ENCODE measurements at regions of chr20 and their contacts with region 1.

Region 1: GRCh38 chr20:63223221-63224207 is 7.6 kb upstream of the YTHDF1 start:
- DNase-seq: peak in 3 of 5 donors; percentile 23 to 60 (median 41)
- H3K4me3 ChIP-seq: no peak overlapping the region
- H3K4me3 Mint-ChIP-seq: no peak overlapping the region
- H3K27ac ChIP-seq: no peak overlapping the region
- H3K27ac Mint-ChIP-seq: no peak overlapping the region
- H3K4me1 ChIP-seq: no peaks in the 10 kb centered on the region
- H3K4me1 Mint-ChIP-seq: no peaks in the 10 kb centered on the region
- H3K27me3 ChIP-seq: no peaks in the 10 kb centered on the region
- H3K27me3 Mint-ChIP-seq: peaks cover 1 to 19% of the 10 kb centered on the region in 2 donors

Region 2: DNA sequence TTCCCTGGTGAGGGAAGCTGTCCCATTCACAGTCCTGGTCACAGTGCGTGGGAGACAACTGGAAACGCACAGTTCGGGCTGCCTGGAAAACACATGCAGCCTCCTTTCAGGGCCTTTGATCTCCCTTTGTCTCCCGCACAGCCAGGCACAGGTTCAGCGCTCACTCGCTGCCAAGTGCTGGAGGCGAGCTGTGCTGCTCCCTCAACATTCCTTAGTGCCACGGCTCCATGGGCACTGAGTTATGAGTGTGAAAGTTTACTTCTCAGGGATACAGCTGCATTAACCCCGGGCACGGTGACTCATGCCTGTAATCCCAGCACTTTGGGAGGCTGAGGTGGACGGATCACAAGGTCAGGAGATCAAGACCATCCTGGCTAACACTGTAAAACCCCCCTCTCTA is 16.6 kb before region 1 on chr20:
- CTCF ChIA-PET with region 1: interaction called, 23 read pairs
- POLR2A ChIA-PET with region 1: no interaction called
- DNase-seq: no peak
- H3K4me3 ChIP-seq: no peak overlapping the region
- H3K4me3 Mint-ChIP-seq: no peak overlapping the region
- H3K27ac ChIP-seq: no peak overlapping the region
- H3K27ac Mint-ChIP-seq: no peak overlapping the region
- H3K4me1 ChIP-seq: peaks cover 8% of the 10 kb centered on the region
- H3K4me1 Mint-ChIP-seq: peaks cover 33 to 61% (median 54%) of the 10 kb centered on the region in 3 donors
- H3K27me3 ChIP-seq: no peaks in the 10 kb centered on the region
- H3K27me3 Mint-ChIP-seq: no peaks in the 10 kb centered on the region

Region 3: GRCh38 chr20:63234739-63235398 is 11.4 kb after region 1 on chr20:
- CTCF ChIA-PET with region 1: interaction called, 27 read pairs
- POLR2A ChIA-PET with region 1: no interaction called
- DNase-seq: no peak
- H3K4me3 ChIP-seq: no peak overlapping the region
- H3K4me3 Mint-ChIP-seq: peak overlapping the region in 1 of 7 donors; percentile 39
- H3K27ac ChIP-seq: no peak overlapping the region
- H3K27ac Mint-ChIP-seq: peak overlapping the region in 1 of 8 donors; percentile 65
- H3K4me1 ChIP-seq: no peaks in the 10 kb centered on the region
- H3K4me1 Mint-ChIP-seq: peaks cover 0 to 7% (median 0%) of the 10 kb centered on the region in 3 donors
- H3K27me3 ChIP-seq: peaks cover 17% of the 10 kb centered on the region
- H3K27me3 Mint-ChIP-seq: peaks cover 14 to 38% of the 10 kb centered on the region in 2 donors

Region 4: GRCh38 chr20:63264519-63264918 is 41.0 kb after region 1 on chr20:
- CTCF ChIA-PET with region 1: no interaction called
- POLR2A ChIA-PET with region 1: no interaction called
- DNase-seq: no peak
- H3K4me3 ChIP-seq: no peak overlapping the region
- H3K4me3 Mint-ChIP-seq: no peak overlapping the region
- H3K27ac ChIP-seq: no peak overlapping the region
- H3K27ac Mint-ChIP-seq: no peak overlapping the region
- H3K4me1 ChIP-seq: no peaks in the 10 kb centered on the region
- H3K4me1 Mint-ChIP-seq: peaks cover 2 to 8% (median 6%) of the 10 kb centered on the region in 3 donors
- H3K27me3 ChIP-seq: no peaks in the 10 kb centered on the region
- H3K27me3 Mint-ChIP-seq: peaks cover 13 to 35% of the 10 kb centered on the region in 2 donors

Region 5: GRCh38 chr20:63290677-63291472 is 67.4 kb after region 1 on chr20:
- CTCF ChIA-PET with region 1: interaction called, 11 read pairs
- POLR2A ChIA-PET with region 1: no interaction called
- DNase-seq: peak; percentile 38 to 64 (median 50)
- H3K4me3 ChIP-seq: no peak overlapping the region
- H3K4me3 Mint-ChIP-seq: peak overlapping the region in 1 of 7 donors; percentile 82
- H3K27ac ChIP-seq: no peak overlapping the region
- H3K27ac Mint-ChIP-seq: no peak overlapping the region
- H3K4me1 ChIP-seq: peaks cover 9% of the 10 kb centered on the region
- H3K4me1 Mint-ChIP-seq: peaks cover 6 to 12% (median 12%) of the 10 kb centered on the region in 3 donors
- H3K27me3 ChIP-seq: no peaks in the 10 kb centered on the region
- H3K27me3 Mint-ChIP-seq: peaks cover 0 to 13% of the 10 kb centered on the region in 2 donors

Region 6: GRCh38 chr20:63381807-63382322 is 158.4 kb after region 1 on chr20:
- CTCF ChIA-PET with region 1: interaction called, 19 read pairs
- POLR2A ChIA-PET with region 1: no interaction called
- DNase-seq: peak in 3 of 5 donors; percentile 19 to 24 (median 21)
- H3K4me3 ChIP-seq: no peak overlapping the region
- H3K4me3 Mint-ChIP-seq: no peak overlapping the region
- H3K27ac ChIP-seq: no peak overlapping the region
- H3K27ac Mint-ChIP-seq: no peak overlapping the region
- H3K4me1 ChIP-seq: no peaks in the 10 kb centered on the region
- H3K4me1 Mint-ChIP-seq: no peaks in the 10 kb centered on the region
- H3K27me3 ChIP-seq: peaks cover 7% of the 10 kb centered on the region
- H3K27me3 Mint-ChIP-seq: peaks cover 17 to 24% of the 10 kb centered on the region in 2 donors

Measured in CD8-positive, alpha-beta memory T cell (primary cell).